ENCODE measurements at regions of chr15 and their contacts with region 1.

Region 1: DNA sequence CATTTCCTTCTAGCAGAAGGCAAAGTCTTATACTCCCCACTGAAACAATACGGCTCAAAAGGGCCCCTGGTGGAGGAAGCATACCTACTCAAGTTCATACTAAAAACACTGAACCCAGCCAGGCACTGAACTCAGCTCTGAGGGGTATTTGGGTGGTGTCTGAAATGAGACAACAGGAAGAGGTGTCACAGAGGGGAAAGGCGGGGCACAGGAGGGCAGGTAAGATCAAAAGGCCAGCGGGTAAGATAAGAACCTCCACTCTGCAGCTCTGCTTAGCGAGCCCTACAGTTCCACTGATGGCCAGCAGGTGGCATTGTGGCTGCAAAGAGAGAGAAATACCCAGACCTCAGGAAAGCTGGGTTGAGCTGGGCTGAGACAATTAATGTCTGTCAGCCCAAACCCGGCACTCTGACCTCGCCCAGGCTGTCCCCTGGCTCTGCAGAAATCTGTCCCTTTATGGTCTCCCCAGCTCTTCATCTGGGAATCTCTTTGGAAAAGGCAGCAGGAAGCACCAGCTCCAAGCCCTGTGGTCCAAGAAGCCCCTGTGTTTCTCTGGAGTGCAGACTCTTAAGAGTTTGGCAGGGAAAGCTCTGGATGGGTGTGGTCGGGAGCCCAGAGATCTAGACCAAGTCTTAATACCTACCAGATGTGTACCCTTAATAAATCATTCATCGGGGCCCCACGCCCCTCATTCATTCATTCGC is 8.4 kb downstream of the MFGE8 start:
- DNase-seq: peak; percentile 54 to 94 (median 82)
- ATAC-seq: peak; percentile 81 to 97 (median 93)
- H3K4me3 ChIP-seq: no peak overlapping the region
- H3K27ac ChIP-seq: no peak overlapping the region
- H3K4me1 ChIP-seq: no peaks in the 10 kb centered on the region
- H3K27me3 ChIP-seq: no peaks in the 10 kb centered on the region
- CTCF ChIP-seq: peak; percentile 98 to 99 (median 98)

Region 2: DNA sequence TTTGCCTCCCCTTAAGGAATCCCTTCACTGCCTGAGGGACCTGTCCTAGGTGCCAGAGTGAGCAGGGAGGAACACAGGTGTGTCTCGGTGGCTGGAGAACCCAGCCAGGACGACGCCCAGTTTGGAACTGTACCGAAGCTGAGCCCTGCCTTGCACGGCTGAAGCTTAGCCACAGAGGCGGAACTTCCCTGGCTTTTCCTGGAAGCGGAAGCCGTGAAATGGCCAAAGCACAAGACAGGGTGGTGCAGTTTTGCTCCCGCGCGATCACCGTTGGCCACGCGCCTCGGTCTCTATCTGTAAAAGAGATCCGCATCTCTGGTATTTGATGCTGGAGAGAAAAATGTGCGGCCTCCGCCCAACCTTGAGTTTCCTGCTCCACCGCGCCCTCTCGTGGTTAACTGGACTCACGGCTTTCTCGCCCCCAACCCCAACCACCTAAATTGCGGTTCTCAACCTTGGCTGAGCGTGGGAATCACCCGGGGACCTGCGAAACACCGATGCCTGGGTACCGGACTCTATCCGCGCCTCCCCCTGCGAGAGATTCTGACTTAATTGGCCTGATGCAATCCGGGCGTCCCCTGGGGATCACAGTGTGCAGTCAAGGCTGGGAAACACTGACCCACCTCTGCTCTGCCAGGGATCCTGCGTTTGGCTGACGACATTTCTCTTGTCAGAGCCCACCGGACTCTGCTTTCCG is 112.7 kb after region 1 on chr15:
- intact Hi-C with region 1: loop called in 2 of 3 experiments (anchors 5 to 10 kb)
- DNase-seq: peak; percentile 44 to 90 (median 66)
- ATAC-seq: peak; percentile 63 to 91 (median 82)
- H3K4me3 ChIP-seq: peak overlapping the region in 1 of 4 donors; percentile 10
- H3K27ac ChIP-seq: no peak overlapping the region
- H3K4me1 ChIP-seq: no peaks in the 10 kb centered on the region
- H3K27me3 ChIP-seq: peaks cover 0 to 8% (median 0%) of the 10 kb centered on the region in 4 donors
- CTCF ChIP-seq: peak; percentile 31 to 73 (median 50)

Region 3: DNA sequence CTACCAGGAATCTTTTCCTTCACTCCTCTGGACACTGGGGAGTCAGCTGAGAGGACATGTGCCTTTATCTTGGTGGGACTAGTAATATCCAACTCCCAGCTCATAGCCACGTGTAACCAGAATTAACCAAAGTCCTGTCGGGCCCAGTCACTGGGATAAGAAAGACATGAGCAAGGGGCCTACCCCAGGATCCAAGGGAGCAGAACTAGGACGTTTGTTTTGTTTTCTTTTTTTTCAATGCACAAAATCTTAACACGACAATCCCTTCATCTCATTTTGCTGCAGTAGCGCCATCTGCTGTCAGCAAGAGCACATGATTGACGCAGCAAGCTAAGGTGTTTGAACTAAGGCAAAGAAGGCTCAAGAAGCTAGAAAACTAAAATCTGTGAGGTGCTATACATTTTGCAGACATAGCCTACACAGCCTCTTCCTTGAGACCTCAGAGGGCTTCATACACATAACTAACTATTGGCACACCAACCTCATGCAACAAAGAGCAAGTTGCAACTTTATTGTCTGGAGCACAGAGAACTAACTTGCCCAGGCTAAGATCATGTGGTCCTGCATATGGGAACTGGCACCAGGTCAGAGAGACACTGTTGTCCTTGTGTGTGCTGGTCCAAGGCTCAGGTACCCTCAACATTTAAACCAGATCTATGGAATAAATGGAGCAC is 273.0 kb after region 1 on chr15:
- intact Hi-C with region 1: loop called in 1 of 3 experiments (anchors 10 kb)
- DNase-seq: peak in 2 of 6 donors; percentile 37 to 65
- ATAC-seq: peak; percentile 44 to 75 (median 72)
- H3K4me3 ChIP-seq: no peak overlapping the region
- H3K27ac ChIP-seq: no peak overlapping the region
- H3K4me1 ChIP-seq: no peaks in the 10 kb centered on the region
- H3K27me3 ChIP-seq: no peaks in the 10 kb centered on the region
- CTCF ChIP-seq: peak; percentile 54 to 72 (median 66)

Region 4: GRCh38 chr15:89442671-89443307 is 538.0 kb after region 1 on chr15:
- intact Hi-C with region 1: no loop called
- DNase-seq: peak; percentile 62 to 92 (median 80)
- ATAC-seq: peak; percentile 43 to 79 (median 76)
- H3K4me3 ChIP-seq: no peak overlapping the region
- H3K27ac ChIP-seq: no peak overlapping the region
- H3K4me1 ChIP-seq: peaks cover 5 to 8% (median 7%) of the 10 kb centered on the region in 3 donors
- H3K27me3 ChIP-seq: no peaks in the 10 kb centered on the region
- CTCF ChIP-seq: peak; percentile 56 to 74 (median 62)